Activated CD4-positive, alpha-beta T cell treated with anti-CD3 and anti-CD28 coated beads for 36 hours (primary cell): ENCODE measurements at regions of chr11 and their contacts with region 1.

Region 1: GRCh38 chr11:96188243-96189006 is 154.6 kb downstream of the MAML2 start:
- DNase-seq: peak; percentile 53
- ATAC-seq: peak; percentile 43
- H3K4me3 Mint-ChIP-seq: peak overlapping the region; percentile 53
- H3K27ac Mint-ChIP-seq: peak overlapping the region; percentile 91
- H3K4me1 Mint-ChIP-seq: peaks cover 90% of the 10 kb centered on the region
- H3K27me3 Mint-ChIP-seq: no peaks in the 10 kb centered on the region

Region 2: GRCh38 chr11:96062134-96062533 is 126.3 kb before region 1 on chr11:
- CTCF ChIA-PET with region 1: no interaction called
- POLR2A ChIA-PET with region 1: interaction called, 3 read pairs
- intact Hi-C with region 1: loop called (anchors 1 to 2 kb)
- DNase-seq: peak; percentile 65
- ATAC-seq: peak; percentile 87
- H3K4me3 Mint-ChIP-seq: peak overlapping the region; percentile 42
- H3K27ac Mint-ChIP-seq: peak overlapping the region; percentile 94
- H3K4me1 Mint-ChIP-seq: peaks cover 81% of the 10 kb centered on the region
- H3K27me3 Mint-ChIP-seq: no peaks in the 10 kb centered on the region

Region 3: GRCh38 chr11:96155627-96156378 is 32.6 kb before region 1 on chr11:
- CTCF ChIA-PET with region 1: no interaction called
- POLR2A ChIA-PET with region 1: interaction called, 5 read pairs
- intact Hi-C with region 1: loop called (anchors 1 kb)
- DNase-seq: peak; percentile 85
- ATAC-seq: peak; percentile 62
- H3K4me3 Mint-ChIP-seq: peak overlapping the region; percentile 48
- H3K27ac Mint-ChIP-seq: peak overlapping the region; percentile 98
- H3K4me1 Mint-ChIP-seq: peaks cover 60% of the 10 kb centered on the region
- H3K27me3 Mint-ChIP-seq: no peaks in the 10 kb centered on the region

Region 4: DNA sequence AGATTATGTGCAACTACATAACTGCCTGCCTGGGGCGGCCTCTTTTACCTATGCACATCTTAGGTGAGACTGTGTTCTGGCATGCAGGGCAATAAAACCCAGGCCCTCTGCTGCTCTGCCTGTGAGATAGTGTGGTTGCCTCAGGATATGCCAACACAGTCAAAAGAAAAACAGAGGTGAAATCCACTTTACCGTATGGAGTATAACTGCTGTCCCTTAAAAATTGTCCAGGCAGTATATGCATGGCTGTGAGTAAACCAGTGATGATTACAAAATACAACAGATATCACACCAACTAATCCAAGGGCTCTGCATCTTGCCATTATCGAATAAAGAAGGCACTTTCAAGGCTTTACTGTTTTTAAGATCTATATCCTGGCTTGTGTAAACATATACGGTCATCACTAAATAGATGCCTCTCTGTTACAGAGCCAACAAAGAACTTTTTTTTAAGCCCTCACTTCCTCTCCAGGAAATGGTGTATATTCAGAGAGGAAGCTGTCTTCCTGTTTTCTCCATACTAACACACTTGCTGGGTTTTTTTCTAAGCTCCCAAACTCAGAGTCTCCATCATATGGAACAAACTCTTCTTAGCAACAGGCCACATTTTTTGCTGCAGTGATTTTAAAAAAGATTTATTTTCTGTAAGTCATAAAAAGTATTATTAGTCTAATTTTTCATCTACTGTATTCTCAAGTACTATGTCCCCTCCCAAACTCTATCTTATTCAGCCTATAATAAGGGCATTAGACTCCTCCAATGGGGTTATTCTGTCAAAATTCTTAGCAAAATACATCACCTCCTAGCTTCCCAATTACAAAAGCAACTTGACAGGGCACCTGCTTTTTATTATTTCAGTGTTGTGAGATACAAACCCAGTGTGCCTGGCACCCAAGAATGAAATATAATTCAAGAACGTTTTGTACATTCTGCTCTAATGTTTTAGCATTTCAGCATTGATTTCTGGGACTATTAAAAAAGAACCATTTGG is 19.3 kb after region 1 on chr11:
- CTCF ChIA-PET with region 1: interaction called, 8 read pairs
- POLR2A ChIA-PET with region 1: interaction called, 6 read pairs
- intact Hi-C with region 1: loop called (anchors 2 kb)
- DNase-seq: peak; percentile 51
- ATAC-seq: peak; percentile 16
- H3K4me3 Mint-ChIP-seq: peak overlapping the region; percentile 51
- H3K27ac Mint-ChIP-seq: peak overlapping the region; percentile 95
- H3K4me1 Mint-ChIP-seq: peaks cover 93% of the 10 kb centered on the region
- H3K27me3 Mint-ChIP-seq: no peaks in the 10 kb centered on the region

Region 5: GRCh38 chr11:96235751-96236150 is 47.3 kb after region 1 on chr11:
- CTCF ChIA-PET with region 1: interaction called, 4 read pairs
- POLR2A ChIA-PET with region 1: interaction called, 4 read pairs
- intact Hi-C with region 1: loop called in 1 of 2 experiments (anchors 1 kb)
- DNase-seq: peak; percentile 86
- ATAC-seq: peak; percentile 98
- H3K4me3 Mint-ChIP-seq: peak overlapping the region; percentile 45
- H3K27ac Mint-ChIP-seq: peak overlapping the region; percentile 78
- H3K4me1 Mint-ChIP-seq: peaks cover 53% of the 10 kb centered on the region
- H3K27me3 Mint-ChIP-seq: no peaks in the 10 kb centered on the region